MCF 10A (cell line): ENCODE measurements at regions of chr21 and their contacts with region 1.

Region 1: DNA sequence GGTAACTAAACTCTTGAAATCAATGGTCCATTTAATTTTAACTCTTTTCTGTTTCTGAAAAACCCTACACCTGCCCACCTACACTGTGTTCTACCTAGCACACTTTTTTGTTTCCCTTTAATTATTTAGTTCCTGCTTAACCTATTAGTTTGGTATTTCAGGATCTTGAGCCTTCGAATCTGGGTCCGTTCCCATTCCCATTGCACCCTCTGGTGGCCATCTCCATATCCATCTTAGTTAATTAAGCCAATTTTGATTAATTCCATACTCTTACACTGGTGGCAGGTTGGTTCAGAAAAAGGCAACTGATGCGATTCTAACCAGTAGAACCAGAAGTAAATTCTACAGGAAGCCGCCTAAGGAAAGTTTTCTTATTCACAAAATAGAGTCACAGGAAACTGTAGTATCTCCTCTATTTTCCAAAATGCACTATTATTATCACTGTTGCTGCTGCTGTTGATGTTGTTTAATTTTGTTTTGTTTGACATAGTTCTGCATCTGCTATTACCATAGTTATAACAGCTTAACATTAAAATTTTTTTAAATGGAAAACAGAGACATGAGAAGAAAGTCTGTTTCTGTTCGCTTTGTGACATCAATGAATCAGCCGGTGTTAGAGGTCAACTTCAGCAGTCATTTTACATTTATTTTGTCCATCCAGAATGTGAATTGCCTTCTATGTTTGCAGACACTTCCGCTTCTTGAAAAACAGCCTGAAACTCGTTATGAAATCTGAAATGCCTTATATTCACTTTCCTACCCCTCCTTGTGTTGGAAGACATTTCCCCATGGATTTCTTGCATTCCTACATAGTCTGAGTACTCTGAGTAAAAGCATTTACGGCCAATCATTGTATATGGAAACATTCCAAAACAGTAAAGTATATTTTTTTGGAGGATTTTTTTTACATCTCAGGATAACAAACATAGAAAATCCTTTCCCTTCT is 115.5 kb upstream of the NCAM2 start:
- DNase-seq: peak; percentile 67
- H3K4me3 Mint-ChIP-seq: no peak overlapping the region
- H3K27ac Mint-ChIP-seq: no peak overlapping the region
- H3K4me1 Mint-ChIP-seq: peaks cover 10% of the 10 kb centered on the region
- H3K27me3 Mint-ChIP-seq: no peaks in the 10 kb centered on the region
- CTCF ChIP-seq: peak; percentile 67

Region 2: GRCh38 chr21:19981938-19982337 is 900.8 kb before region 1 on chr21:
- CTCF ChIA-PET with region 1: no interaction called
- POLR2A ChIA-PET with region 1: no interaction called
- intact Hi-C with region 1: loop called (anchors 1 kb)
- DNase-seq: peak; percentile 33
- H3K4me3 Mint-ChIP-seq: no peak overlapping the region
- H3K27ac Mint-ChIP-seq: no peak overlapping the region
- H3K4me1 Mint-ChIP-seq: no peaks in the 10 kb centered on the region
- H3K27me3 Mint-ChIP-seq: no peaks in the 10 kb centered on the region
- CTCF ChIP-seq: peak; percentile 30

Region 3: DNA sequence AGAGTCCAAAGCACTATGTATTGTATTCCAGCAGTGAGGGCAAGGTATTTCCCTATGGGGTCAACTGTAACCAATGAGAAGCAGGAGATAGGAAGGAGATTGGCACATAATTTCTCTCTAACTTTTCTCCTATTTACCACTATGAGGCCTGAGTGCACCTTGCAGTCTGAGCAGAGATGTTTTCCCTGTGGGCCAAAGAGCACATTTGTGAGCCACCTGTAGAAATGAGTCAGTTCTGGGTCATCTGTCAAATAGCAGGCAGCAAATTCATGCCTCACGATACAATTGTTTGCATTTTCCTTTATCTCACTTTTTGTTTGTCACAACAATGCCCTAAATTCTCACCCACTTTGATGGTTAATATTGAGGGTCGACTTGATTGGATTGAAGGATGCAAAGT is 431.7 kb before region 1 on chr21:
- CTCF ChIA-PET with region 1: interaction called, 3 read pairs
- POLR2A ChIA-PET with region 1: no interaction called
- intact Hi-C with region 1: loop called (anchors 5 kb)
- DNase-seq: peak; percentile 78
- H3K4me3 Mint-ChIP-seq: no peak overlapping the region
- H3K27ac Mint-ChIP-seq: no peak overlapping the region
- H3K4me1 Mint-ChIP-seq: peaks cover 22% of the 10 kb centered on the region
- H3K27me3 Mint-ChIP-seq: no peaks in the 10 kb centered on the region
- CTCF ChIP-seq: no peak